GM12878 (cell line): ENCODE measurements at regions of chr12 and their contacts with region 1.

Region 1: DNA sequence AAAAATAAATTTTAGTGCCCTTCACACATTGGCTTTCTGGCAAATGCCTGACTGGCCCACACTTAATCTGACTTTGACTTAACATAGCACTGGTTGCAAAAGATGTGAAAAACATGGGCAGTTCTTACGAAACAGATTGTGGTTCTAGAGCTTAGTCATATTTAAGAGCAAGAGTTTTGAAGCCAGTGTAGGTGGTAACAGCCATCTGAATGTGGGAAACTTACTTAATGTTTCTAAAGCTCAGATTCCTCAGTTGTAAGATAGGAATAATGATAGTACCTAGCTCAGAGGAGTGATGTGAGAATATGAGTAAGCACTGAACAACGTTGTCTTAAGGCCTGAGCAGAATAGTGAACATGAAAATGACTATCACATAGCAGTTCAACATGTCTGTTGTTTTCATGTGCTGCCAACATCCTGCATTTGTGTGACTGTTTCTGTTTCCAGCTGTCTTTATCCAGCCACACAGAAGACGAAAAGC is 262.7 kb downstream of the SYT1 start:
- DNase-seq: no peak
- ATAC-seq: peak; percentile 89
- H3K4me3 ChIP-seq: no peak overlapping the region
- H3K27ac ChIP-seq: no peak overlapping the region
- H3K4me1 ChIP-seq: no peaks in the 10 kb centered on the region
- H3K27me3 ChIP-seq: no peaks in the 10 kb centered on the region
- CTCF ChIP-seq: no peak
- EP300 ChIP-seq: no peak
- POLR2A ChIP-seq: no peak
- RAD21 ChIP-seq: no peak

Region 2: DNA sequence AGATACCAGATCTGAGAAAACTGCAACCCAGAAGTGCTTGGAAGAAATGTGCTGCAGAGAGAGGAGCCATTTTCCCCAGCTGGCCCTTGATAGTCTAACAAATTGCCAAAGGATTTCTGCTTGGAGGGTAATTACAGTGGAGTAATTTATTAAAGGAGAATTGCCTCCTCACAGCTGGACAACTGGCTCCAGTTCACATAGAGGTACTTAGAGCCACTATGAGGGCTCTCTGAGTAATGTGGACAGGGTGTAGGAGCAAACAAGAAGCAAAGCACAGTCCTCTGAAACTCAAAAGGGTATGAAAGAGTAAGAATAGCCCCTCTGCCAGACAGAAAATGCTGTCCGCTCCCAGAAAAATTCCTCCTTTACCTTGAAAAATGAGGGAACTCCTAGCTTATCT is 72.9 kb after region 1 on chr12:
- CTCF ChIA-PET with region 1: no interaction called
- POLR2A ChIA-PET with region 1: no interaction called
- RAD21 ChIA-PET with region 1: no interaction called
- SMC1A ChIA-PET with region 1: no interaction called
- in situ Hi-C with region 1: no loop called
- intact Hi-C with region 1: no loop called
- DNase-seq: no peak
- ATAC-seq: no peak
- H3K4me3 ChIP-seq: no peak overlapping the region
- H3K27ac ChIP-seq: no peak overlapping the region
- H3K4me1 ChIP-seq: no peaks in the 10 kb centered on the region
- H3K27me3 ChIP-seq: no peaks in the 10 kb centered on the region
- CTCF ChIP-seq: no peak
- EP300 ChIP-seq: no peak
- POLR2A ChIP-seq: no peak
- RAD21 ChIP-seq: no peak

Region 3: GRCh38 chr12:79252358-79253075 is 125.2 kb after region 1 on chr12:
- CTCF ChIA-PET with region 1: no interaction called
- POLR2A ChIA-PET with region 1: no interaction called
- RAD21 ChIA-PET with region 1: no interaction called
- SMC1A ChIA-PET with region 1: no interaction called
- in situ Hi-C with region 1: no loop called
- intact Hi-C with region 1: no loop called
- DNase-seq: no peak
- ATAC-seq: no peak
- H3K4me3 ChIP-seq: no peak overlapping the region
- H3K27ac ChIP-seq: no peak overlapping the region
- H3K4me1 ChIP-seq: no peaks in the 10 kb centered on the region
- H3K27me3 ChIP-seq: no peaks in the 10 kb centered on the region; a peak in 1 of 4 replicates
- CTCF ChIP-seq: no peak
- EP300 ChIP-seq: no peak
- POLR2A ChIP-seq: no peak
- RAD21 ChIP-seq: no peak

Region 4: DNA sequence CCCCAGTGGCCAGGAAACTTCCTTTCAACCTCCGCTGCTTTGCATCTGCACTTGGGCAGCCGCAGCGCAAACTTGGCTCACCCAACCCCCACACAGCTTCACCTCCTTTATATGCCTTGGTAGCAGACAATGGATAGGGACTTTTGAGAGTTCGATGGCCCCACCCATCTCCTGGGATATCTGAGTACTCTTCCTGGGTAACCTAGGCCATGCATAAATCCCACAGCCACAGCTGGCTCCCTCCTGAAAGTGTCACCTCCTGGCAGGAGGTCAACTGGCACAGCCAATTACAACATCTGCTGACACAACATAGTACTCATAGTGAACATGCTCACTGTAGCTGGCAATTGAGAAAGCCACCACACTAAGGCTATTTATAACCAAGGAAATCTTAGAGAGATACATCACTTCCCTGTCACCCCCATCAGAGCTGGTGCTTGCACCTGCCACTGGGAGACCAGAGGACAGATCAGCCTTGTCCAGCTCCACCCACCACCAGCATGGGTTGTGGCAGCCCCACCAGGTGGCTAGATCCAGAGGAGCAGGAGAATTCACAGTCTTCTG is 147.3 kb after region 1 on chr12:
- CTCF ChIA-PET with region 1: no interaction called
- POLR2A ChIA-PET with region 1: no interaction called
- RAD21 ChIA-PET with region 1: no interaction called
- SMC1A ChIA-PET with region 1: no interaction called
- in situ Hi-C with region 1: no loop called
- intact Hi-C with region 1: no loop called
- DNase-seq: no peak
- ATAC-seq: peak; percentile 56
- H3K4me3 ChIP-seq: no peak overlapping the region
- H3K27ac ChIP-seq: no peak overlapping the region
- H3K4me1 ChIP-seq: no peaks in the 10 kb centered on the region
- H3K27me3 ChIP-seq: no peaks in the 10 kb centered on the region
- CTCF ChIP-seq: no peak
- EP300 ChIP-seq: no peak
- POLR2A ChIP-seq: no peak
- RAD21 ChIP-seq: no peak

Region 5: GRCh38 chr12:79344855-79345847 is 217.8 kb after region 1 on chr12:
- CTCF ChIA-PET with region 1: no interaction called
- POLR2A ChIA-PET with region 1: no interaction called
- RAD21 ChIA-PET with region 1: interaction called, 3 read pairs
- SMC1A ChIA-PET with region 1: no interaction called
- in situ Hi-C with region 1: no loop called
- intact Hi-C with region 1: loop called (anchors 10 kb)
- DNase-seq: peak; percentile 2
- ATAC-seq: peak; percentile 96
- H3K4me3 ChIP-seq: no peak overlapping the region
- H3K27ac ChIP-seq: no peak overlapping the region
- H3K4me1 ChIP-seq: no peaks in the 10 kb centered on the region
- H3K27me3 ChIP-seq: no peaks in the 10 kb centered on the region
- CTCF ChIP-seq: peak; percentile 51 to 72 (median 64)
- EP300 ChIP-seq: no peak
- POLR2A ChIP-seq: no peak
- RAD21 ChIP-seq: peak; percentile 64